ENCODE measurements at regions of chr11 and their contacts with region 1.

Region 1: DNA sequence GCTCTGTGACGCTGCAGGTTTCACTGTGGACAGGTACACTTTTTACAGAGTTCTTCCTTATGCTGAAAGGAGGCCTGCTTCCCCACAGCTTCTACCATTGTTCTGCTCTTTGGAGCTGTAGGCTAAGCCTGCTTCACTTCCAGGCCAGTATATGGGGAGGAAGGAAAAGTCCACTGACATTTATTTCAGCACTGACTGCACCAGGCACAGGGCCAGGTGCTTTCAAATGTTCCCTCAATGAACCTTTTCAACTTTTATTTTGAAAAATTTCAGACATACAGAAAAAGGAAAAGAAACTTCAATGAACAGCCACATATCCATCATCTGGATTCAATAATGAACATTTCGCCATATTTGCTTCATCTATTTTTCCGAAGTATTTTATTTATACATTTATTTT is 22.0 kb downstream of the POU2F3 start:
- DNase-seq: no peak
- H3K4me3 Mint-ChIP-seq: no peak overlapping the region
- H3K27ac Mint-ChIP-seq: no peak overlapping the region
- H3K4me1 Mint-ChIP-seq: no peaks in the 10 kb centered on the region
- H3K27me3 Mint-ChIP-seq: peaks cover 46% of the 10 kb centered on the region

Region 2: DNA sequence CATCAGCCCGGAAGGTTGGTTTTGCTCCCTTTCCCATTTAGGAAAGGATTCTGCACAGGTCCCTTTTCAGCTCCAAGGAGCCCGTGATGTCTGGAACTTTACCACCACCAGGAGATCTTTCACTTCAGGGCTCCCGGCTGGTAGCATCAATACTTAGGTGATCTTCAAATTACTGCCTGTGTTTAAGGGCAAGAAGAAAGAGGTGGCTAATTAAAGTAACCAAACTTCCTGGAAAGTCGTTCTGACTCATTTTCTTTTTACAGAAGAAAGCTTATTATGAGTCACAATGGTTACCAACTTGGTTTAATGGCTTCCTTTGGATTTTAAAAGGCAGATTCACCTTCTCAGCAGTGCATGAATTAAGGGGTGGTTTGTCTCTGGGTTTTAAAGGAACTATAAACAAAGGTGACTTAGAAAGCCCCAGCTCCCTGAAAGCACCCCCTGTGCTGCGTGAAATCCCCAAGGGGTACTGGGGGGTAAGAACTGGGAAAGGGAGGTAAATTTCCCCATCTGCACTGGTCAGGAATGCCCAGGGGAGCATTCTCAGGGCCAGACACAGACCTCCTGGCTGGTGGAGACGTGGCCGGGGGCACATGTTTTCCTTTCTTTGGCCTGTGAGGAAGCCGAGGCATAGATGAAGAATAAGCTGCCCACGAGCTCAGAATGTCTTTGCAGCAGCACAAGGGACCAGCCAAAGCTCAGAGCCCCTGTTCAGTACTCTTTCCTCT is 13.2 kb before region 1 on chr11:
- CTCF ChIA-PET with region 1: no interaction called
- intact Hi-C with region 1: no loop called
- DNase-seq: peak; percentile 42
- H3K4me3 Mint-ChIP-seq: no peak overlapping the region
- H3K27ac Mint-ChIP-seq: peak overlapping the region; percentile 78
- H3K4me1 Mint-ChIP-seq: peaks cover 42% of the 10 kb centered on the region
- H3K27me3 Mint-ChIP-seq: peaks cover 64% of the 10 kb centered on the region

Region 3: GRCh38 chr11:120280600-120281051 is 18.7 kb after region 1 on chr11:
- CTCF ChIA-PET with region 1: no interaction called
- intact Hi-C with region 1: loop called (anchors 1 kb)
- DNase-seq: no peak
- H3K4me3 Mint-ChIP-seq: no peak overlapping the region
- H3K27ac Mint-ChIP-seq: no peak overlapping the region
- H3K4me1 Mint-ChIP-seq: no peaks in the 10 kb centered on the region
- H3K27me3 Mint-ChIP-seq: no peaks in the 10 kb centered on the region

Measured in activated naive CD4-positive, alpha-beta T cell treated with anti-CD3 and anti-CD28 coated beads for 36 hours (primary cell).